Psoas muscle (tissue), 8 donors: ENCODE measurements at regions of chr15 and their contacts with region 1.

Region 1: DNA sequence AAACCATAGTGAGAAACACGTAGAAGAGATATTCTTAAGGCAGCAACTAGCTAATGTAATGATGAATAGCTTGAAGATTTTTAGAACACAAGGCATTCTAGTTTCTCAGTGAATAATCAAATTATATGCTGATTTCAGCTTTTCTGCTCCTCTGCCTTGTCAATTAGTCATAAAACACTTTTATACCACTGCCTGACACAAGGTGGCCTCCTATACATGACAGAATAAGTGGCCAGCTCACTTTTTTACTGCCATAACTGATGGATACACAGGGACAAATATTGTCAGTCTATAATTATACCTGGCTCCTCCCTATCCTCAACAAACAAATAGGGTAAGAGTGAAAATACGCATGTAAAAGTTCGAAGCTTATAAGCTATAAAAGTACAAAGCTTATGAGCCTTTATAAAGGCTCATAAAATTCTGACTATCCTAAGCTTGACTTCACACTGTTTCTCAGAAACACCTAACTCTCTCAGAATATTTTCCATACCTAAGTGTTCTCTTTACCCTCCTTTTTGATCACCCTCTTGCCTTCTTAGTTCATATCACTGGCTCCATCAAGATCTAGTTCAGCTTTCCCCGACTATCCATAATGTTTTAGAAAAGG is 81.6 kb downstream of the HERC1 start:
- DNase-seq: no peak
- ATAC-seq: peak; percentile 78 to 93 (median 90)
- H3K4me3 ChIP-seq: no peak overlapping the region
- H3K27ac ChIP-seq: peak overlapping the region; percentile 28
- H3K4me1 ChIP-seq: no peaks in the 10 kb centered on the region
- H3K27me3 ChIP-seq: no peaks in the 10 kb centered on the region
- CTCF ChIP-seq: peak; percentile 81

Region 2: GRCh38 chr15:63626955-63627354 is 125.2 kb before region 1 on chr15:
- intact Hi-C with region 1: no loop called
- DNase-seq: no peak
- ATAC-seq: no peak
- H3K4me3 ChIP-seq: no peak overlapping the region
- H3K27ac ChIP-seq: no peak overlapping the region
- H3K4me1 ChIP-seq: no peaks in the 10 kb centered on the region
- H3K27me3 ChIP-seq: no peaks in the 10 kb centered on the region
- CTCF ChIP-seq: no peak

Region 3: GRCh38 chr15:63780969-63781368 is 28.8 kb after region 1 on chr15:
- intact Hi-C with region 1: loop called in 1 of 2 experiments (anchors 1 kb)
- DNase-seq: no peak
- ATAC-seq: no peak
- H3K4me3 ChIP-seq: no peak overlapping the region
- H3K27ac ChIP-seq: no peak overlapping the region
- H3K4me1 ChIP-seq: peaks cover 22% of the 10 kb centered on the region
- H3K27me3 ChIP-seq: no peaks in the 10 kb centered on the region
- CTCF ChIP-seq: no peak

Region 4: GRCh38 chr15:63891079-63891767 is 139.0 kb after region 1 on chr15:
- intact Hi-C with region 1: loop called (anchors 2 to 5 kb)
- DNase-seq: peak; percentile 79 to 86
- ATAC-seq: peak in 3 of 4 donors; percentile 42 to 59 (median 48)
- H3K4me3 ChIP-seq: no peak overlapping the region
- H3K27ac ChIP-seq: no peak overlapping the region
- H3K4me1 ChIP-seq: peaks cover 55% of the 10 kb centered on the region
- H3K27me3 ChIP-seq: no peaks in the 10 kb centered on the region
- CTCF ChIP-seq: peak; percentile 81

Region 5: GRCh38 chr15:64067564-64068030 is 315.4 kb after region 1 on chr15:
- intact Hi-C with region 1: loop called (anchors 2 to 5 kb)
- DNase-seq: peak; percentile 46 to 68
- ATAC-seq: peak; percentile 55 to 65 (median 56)
- H3K4me3 ChIP-seq: peak overlapping the region; percentile 15
- H3K27ac ChIP-seq: no peak overlapping the region
- H3K4me1 ChIP-seq: peaks cover 29% of the 10 kb centered on the region
- H3K27me3 ChIP-seq: no peaks in the 10 kb centered on the region
- CTCF ChIP-seq: peak; percentile 82